ENCODE measurements at regions of chr3 and their contacts with region 1.

Region 1: DNA sequence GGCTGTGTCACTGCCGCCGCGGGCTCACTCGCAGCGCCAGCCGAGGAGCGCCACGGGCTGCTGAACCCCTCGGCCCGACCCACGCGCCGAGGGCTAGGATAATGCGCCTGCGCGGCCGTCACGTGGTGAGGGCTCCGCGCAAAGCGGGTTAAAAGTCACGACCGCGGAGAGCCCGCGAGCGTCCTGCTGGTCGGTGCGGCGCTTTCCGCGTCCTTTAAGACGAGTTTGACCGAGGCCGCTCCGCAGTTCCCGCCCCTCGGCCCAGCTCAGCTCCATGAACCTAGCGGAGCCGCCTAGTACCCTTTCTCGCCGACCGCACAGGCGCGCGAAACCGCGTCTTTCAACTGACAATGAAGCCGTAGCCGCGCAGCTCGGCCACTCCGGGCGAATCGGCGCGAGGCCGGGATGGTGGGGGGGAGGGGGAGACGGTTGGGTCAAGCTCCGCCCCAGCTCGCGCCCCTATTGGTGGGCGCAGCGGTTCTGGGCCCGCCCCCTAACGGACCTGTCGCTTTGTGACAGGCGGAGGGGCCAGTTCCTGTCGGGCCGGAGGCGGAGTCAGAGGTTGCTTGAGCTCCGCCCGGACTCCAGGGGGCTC is 636 bp upstream of the STT3B start:
- DNase-seq: peak; percentile 97
- ATAC-seq: peak; percentile 84
- H3K4me3 Mint-ChIP-seq: peak overlapping the region; percentile 96
- H3K27ac Mint-ChIP-seq: peak overlapping the region; percentile 99
- H3K4me1 Mint-ChIP-seq: peaks cover 31% of the 10 kb centered on the region
- H3K27me3 Mint-ChIP-seq: no peaks in the 10 kb centered on the region
- CTCF ChIP-seq: no peak

Region 2: DNA sequence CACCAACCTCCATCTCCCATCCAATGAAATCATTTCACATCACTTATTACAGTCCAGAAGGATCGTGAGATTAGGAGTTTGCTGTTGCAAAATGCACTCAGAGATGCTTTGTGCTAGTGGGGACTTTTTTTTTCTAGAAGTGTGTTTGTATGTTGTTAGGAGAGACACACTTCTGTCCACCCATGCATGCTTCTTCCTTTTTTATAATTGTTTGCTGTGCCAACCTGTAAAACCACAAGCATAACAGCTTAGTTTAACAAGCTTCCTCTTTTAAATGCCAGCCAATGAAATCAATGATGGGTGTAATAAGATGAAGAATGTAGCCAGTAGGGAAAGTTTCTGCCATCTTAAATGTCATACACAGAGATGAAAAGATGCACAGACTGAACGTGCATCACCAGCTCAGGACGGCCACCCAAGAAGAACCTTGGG is 304.9 kb before region 1 on chr3:
- CTCF ChIA-PET with region 1: no interaction called
- POLR2A ChIA-PET with region 1: interaction called, 10 read pairs
- intact Hi-C with region 1: loop called (anchors 1 kb)
- DNase-seq: no peak
- ATAC-seq: peak; percentile 83
- H3K4me3 Mint-ChIP-seq: peak overlapping the region; percentile 54
- H3K27ac Mint-ChIP-seq: peak overlapping the region; percentile 80
- H3K4me1 Mint-ChIP-seq: peaks cover 78% of the 10 kb centered on the region
- H3K27me3 Mint-ChIP-seq: no peaks in the 10 kb centered on the region
- CTCF ChIP-seq: no peak

Region 3: GRCh38 chr3:31265646-31266428 is 266.3 kb before region 1 on chr3:
- CTCF ChIA-PET with region 1: no interaction called
- POLR2A ChIA-PET with region 1: no interaction called
- intact Hi-C with region 1: no loop called
- DNase-seq: no peak
- ATAC-seq: no peak
- H3K4me3 Mint-ChIP-seq: no peak overlapping the region
- H3K27ac Mint-ChIP-seq: no peak overlapping the region
- H3K4me1 Mint-ChIP-seq: peaks cover 3% of the 10 kb centered on the region
- H3K27me3 Mint-ChIP-seq: peaks cover 8% of the 10 kb centered on the region
- CTCF ChIP-seq: no peak

Region 4: DNA sequence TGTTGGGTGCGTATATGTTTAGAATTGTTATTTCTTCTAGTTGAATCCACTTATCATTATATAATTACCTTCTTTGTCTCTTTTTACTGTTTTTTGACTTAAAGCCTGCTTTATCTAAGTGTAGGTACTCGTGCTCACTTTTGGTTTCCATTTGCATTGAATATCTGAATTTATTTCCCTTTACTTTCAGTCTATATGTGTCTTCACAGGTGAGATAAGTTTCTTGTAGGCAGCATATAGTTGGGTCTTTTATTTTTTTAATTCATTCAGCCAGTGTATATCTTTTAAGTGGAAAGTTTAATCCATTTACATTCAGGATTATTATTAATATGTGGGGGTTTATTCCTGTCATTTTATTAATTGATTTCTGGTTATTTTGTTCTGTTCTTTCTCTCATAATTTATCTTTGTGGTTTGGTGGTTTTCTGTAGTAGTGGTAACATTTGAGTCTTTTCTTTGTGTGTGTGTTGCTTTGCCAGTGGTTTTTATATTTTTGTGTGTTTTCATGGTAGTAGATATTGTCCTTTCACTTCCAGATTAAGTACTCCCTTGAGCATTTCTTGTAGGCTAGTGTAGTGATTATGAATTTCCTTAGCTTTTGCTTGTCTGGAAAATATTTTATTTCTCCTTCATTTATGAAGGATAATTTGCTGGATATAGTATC is 27.9 kb after region 1 on chr3:
- CTCF ChIA-PET with region 1: no interaction called
- POLR2A ChIA-PET with region 1: no interaction called
- intact Hi-C with region 1: no loop called
- DNase-seq: no peak
- ATAC-seq: no peak
- H3K4me3 Mint-ChIP-seq: no peak overlapping the region
- H3K27ac Mint-ChIP-seq: no peak overlapping the region
- H3K4me1 Mint-ChIP-seq: peaks cover 66% of the 10 kb centered on the region
- H3K27me3 Mint-ChIP-seq: no peaks in the 10 kb centered on the region
- CTCF ChIP-seq: no peak

Region 5: GRCh38 chr3:31573036-31573779 is 41.1 kb after region 1 on chr3:
- CTCF ChIA-PET with region 1: no interaction called
- POLR2A ChIA-PET with region 1: interaction called, 9 read pairs
- intact Hi-C with region 1: loop called (anchors 2 kb)
- DNase-seq: no peak
- ATAC-seq: peak; percentile 71
- H3K4me3 Mint-ChIP-seq: no peak overlapping the region
- H3K27ac Mint-ChIP-seq: no peak overlapping the region
- H3K4me1 Mint-ChIP-seq: peaks cover 56% of the 10 kb centered on the region
- H3K27me3 Mint-ChIP-seq: no peaks in the 10 kb centered on the region
- CTCF ChIP-seq: no peak

Region 6: DNA sequence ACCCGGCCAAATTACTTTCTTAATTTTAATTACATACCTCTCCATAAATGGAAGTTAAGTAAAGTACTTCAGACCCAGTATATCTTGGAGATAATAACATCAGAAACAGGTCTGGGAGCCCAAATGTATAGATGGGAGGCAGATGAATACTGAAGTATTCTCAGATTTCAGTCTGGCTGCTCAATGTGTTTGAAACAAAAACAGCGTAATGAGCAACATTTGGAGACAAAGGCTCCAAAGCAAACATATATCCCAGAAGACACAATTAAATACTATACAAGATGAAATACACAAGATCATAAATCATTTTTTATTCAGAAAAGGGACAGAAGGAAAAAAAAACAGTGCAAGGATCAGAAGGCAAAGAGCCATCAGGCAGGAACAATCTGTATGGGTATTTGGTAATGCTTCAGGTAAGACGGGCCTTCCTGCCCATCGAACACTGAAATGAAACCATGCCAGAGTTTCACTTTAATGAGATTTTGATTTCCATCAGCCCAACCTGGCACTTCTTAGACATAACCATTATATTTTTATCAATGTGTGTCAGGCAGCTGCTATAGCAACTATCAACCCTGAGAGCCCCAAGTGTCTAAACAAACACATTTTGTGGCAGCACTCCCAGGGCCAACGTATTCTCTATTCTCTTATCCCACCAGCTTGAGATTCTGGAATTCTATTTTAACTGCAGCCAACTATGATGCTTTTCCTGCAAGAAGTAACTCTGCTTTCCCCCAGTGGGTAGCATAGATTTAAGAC is 211.4 kb after region 1 on chr3:
- CTCF ChIA-PET with region 1: no interaction called
- POLR2A ChIA-PET with region 1: no interaction called
- intact Hi-C with region 1: no loop called
- DNase-seq: no peak
- ATAC-seq: no peak
- H3K4me3 Mint-ChIP-seq: no peak overlapping the region
- H3K27ac Mint-ChIP-seq: no peak overlapping the region
- H3K4me1 Mint-ChIP-seq: no peaks in the 10 kb centered on the region
- H3K27me3 Mint-ChIP-seq: no peaks in the 10 kb centered on the region
- CTCF ChIP-seq: no peak

Region 7: GRCh38 chr3:32106280-32106928 is 574.3 kb after region 1 on chr3 and contains the start of gene GPD1L:
- CTCF ChIA-PET with region 1: no interaction called
- POLR2A ChIA-PET with region 1: interaction called, 4 read pairs
- intact Hi-C with region 1: loop called (anchors 1 kb)
- DNase-seq: peak; percentile 93
- ATAC-seq: peak; percentile 99
- H3K4me3 Mint-ChIP-seq: peak within 1 kb of the TSS; percentile 96
- H3K27ac Mint-ChIP-seq: peak within 1 kb of the TSS; percentile 87
- H3K4me1 Mint-ChIP-seq: peaks cover 18% of the 10 kb centered on the region
- H3K27me3 Mint-ChIP-seq: no peaks in the 10 kb centered on the region
- CTCF ChIP-seq: no peak
- total RNA-seq, gene GPD1L: 8.2 and 9.6 TPM in 2 replicates

Region 8: GRCh38 chr3:32136703-32137102 is 604.6 kb after region 1 on chr3:
- CTCF ChIA-PET with region 1: no interaction called
- POLR2A ChIA-PET with region 1: no interaction called
- intact Hi-C with region 1: no loop called
- DNase-seq: no peak
- ATAC-seq: no peak
- H3K4me3 Mint-ChIP-seq: no peak overlapping the region
- H3K27ac Mint-ChIP-seq: no peak overlapping the region
- H3K4me1 Mint-ChIP-seq: peaks cover 20% of the 10 kb centered on the region
- H3K27me3 Mint-ChIP-seq: no peaks in the 10 kb centered on the region
- CTCF ChIP-seq: no peak

Region 9: GRCh38 chr3:32684800-32685542 is 1152.9 kb after region 1 on chr3 and contains the start of gene CNOT10:
- CTCF ChIA-PET with region 1: no interaction called
- POLR2A ChIA-PET with region 1: interaction called, 3 read pairs
- intact Hi-C with region 1: loop called (anchors 1 kb)
- DNase-seq: peak; percentile 95
- ATAC-seq: peak; percentile 95
- H3K4me3 Mint-ChIP-seq: peak within 1 kb of the TSS; percentile 93
- H3K27ac Mint-ChIP-seq: peak within 1 kb of the TSS; percentile 89
- H3K4me1 Mint-ChIP-seq: peaks cover 31% of the 10 kb centered on the region
- H3K27me3 Mint-ChIP-seq: no peaks in the 10 kb centered on the region
- CTCF ChIP-seq: no peak
- total RNA-seq, gene CNOT10: 48.0 and 55.5 TPM in 2 replicates